Activated CD4-positive, alpha-beta memory T cell treated with anti-CD3 and anti-CD28 coated beads, Interleukin-2, amount 10 ng/mL, durations not matched to agents 7 days and 5 days (primary cell): ENCODE measurements at regions of chr1 and their contacts with region 1.

Region 1: GRCh38 chr1:43073490-43074230 is 98.4 kb downstream of the EBNA1BP2 start:
- DNase-seq: peak; percentile 80
- H3K4me3 Mint-ChIP-seq: no peak overlapping the region
- H3K27ac Mint-ChIP-seq: no peak overlapping the region
- H3K4me1 Mint-ChIP-seq: peaks cover 6% of the 10 kb centered on the region
- H3K27me3 Mint-ChIP-seq: no peaks in the 10 kb centered on the region

Region 2: DNA sequence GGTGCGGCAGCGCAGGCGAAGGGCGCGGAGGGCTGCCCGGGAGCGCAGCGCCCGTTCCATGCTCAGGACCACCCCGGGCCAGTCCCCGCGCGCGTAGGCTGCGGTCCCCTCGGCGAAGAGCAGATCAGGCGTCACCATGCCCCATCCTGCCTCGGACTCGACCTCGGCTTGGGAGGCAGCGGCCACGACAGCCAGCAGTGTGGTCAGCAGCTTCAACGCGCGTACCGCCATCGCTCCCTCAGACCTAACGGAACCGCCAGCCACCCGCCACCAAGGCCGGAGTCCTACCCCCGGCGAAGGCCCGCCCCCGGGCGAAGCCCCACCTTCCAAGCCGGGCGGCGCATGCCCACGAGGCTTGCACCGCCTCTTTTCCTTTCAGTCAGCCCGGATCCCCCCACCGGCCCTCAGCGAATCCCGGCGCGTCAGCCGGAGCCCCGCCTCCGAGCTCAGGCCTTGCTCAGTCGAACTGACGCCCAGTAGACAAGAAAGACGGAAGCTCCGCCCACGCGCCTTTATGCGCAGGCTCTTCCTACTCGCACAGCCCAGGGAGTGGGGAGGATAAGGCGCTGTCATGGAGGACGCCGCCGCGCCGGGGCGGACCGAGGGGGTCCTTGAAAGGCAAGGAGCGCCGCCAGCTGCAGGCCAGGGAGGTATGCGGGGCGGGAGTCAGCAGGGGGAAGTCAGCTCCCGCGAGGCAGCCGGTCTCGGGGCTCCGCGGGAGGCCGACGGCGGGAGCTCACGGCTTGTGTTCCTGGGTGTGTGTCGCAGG is 306.7 kb before region 1 on chr1 and contains the starts of genes C1orf50 and P3H1:
- CTCF ChIA-PET with region 1: interaction called, 18 read pairs
- POLR2A ChIA-PET with region 1: interaction called, 3 read pairs
- DNase-seq: peak; percentile 100
- H3K4me3 Mint-ChIP-seq: no peak within 1 kb of the TSS
- H3K27ac Mint-ChIP-seq: peak within 1 kb of the TSS; percentile 85
- H3K4me1 Mint-ChIP-seq: peaks cover 36% of the 10 kb centered on the region
- H3K27me3 Mint-ChIP-seq: no peaks in the 10 kb centered on the region
- total RNA-seq, gene C1orf50: 7.1 to 7.2 TPM
- total RNA-seq, gene P3H1: 40.1 to 43.3 TPM

Region 3: GRCh38 chr1:42846257-42847110 is 227.2 kb before region 1 on chr1 and contains the start of gene ZNF691:
- CTCF ChIA-PET with region 1: interaction called, 10 read pairs
- POLR2A ChIA-PET with region 1: no interaction called
- DNase-seq: peak; percentile 91
- H3K4me3 Mint-ChIP-seq: peak within 1 kb of the TSS; percentile 87
- H3K27ac Mint-ChIP-seq: peak within 1 kb of the TSS; percentile 79
- H3K4me1 Mint-ChIP-seq: peaks cover 33% of the 10 kb centered on the region
- H3K27me3 Mint-ChIP-seq: no peaks in the 10 kb centered on the region
- total RNA-seq, gene ZNF691: 10.4 to 12.6 TPM

Region 4: DNA sequence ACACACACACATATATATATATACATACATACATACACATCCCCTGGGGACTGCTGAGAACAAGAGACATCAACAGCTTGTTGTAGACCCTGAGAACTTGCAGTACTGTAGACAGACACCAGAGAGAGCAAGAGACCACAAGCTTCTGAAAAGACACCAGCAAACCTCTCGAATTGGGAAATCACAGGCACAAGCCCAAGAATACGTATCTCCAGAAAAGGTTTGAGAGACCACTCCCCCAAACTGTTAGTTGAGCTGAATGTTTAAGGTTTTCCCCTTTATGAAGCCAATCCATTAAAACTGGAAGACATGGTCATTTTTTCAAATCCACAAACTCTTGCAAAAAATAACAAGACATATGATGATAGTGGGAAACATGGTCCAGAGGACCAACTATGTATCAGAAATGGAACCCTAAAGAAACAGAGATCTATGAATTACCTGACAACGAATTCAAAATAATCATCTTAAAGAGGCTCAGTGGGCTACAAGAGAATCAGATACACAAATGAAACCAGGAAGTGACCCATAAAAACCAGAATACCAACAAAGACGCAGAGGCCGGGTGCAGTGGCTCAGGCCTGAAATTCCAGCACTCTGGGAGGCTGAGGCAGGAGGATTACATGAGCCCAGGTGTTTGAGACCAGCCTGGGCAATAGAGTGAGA is 160.1 kb before region 1 on chr1:
- CTCF ChIA-PET with region 1: interaction called, 380 read pairs
- POLR2A ChIA-PET with region 1: interaction called, 43 read pairs
- DNase-seq: peak; percentile 62
- H3K4me3 Mint-ChIP-seq: no peak overlapping the region
- H3K27ac Mint-ChIP-seq: no peak overlapping the region
- H3K4me1 Mint-ChIP-seq: peaks cover 16% of the 10 kb centered on the region
- H3K27me3 Mint-ChIP-seq: peaks cover 9% of the 10 kb centered on the region

Region 5: DNA sequence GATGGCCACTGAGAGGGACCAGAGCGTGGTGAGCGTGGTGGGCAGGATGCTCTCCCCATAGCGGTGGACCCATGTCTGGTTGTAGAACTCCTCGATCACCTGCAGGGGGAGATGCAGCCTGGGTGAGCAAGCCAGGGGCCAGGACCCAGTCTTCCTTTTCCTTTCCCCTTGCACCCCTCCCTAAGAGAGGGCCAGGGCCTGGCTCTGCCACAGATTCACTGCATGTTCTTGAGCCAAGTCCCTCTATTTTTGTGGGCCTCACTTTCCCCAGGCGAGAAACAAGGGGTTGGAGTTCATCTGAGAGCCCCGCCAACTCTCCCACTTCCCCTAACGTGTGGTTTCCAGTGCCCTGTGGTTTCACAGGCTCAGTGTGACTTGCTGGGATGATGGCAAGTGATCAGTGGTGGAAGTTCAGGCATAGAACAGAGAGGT is 142.5 kb before region 1 on chr1:
- CTCF ChIA-PET with region 1: interaction called, 13 read pairs
- POLR2A ChIA-PET with region 1: interaction called, 5 read pairs
- DNase-seq: peak; percentile 69
- H3K4me3 Mint-ChIP-seq: peak overlapping the region; percentile 74
- H3K27ac Mint-ChIP-seq: peak overlapping the region; percentile 94
- H3K4me1 Mint-ChIP-seq: peaks cover 97% of the 10 kb centered on the region
- H3K27me3 Mint-ChIP-seq: no peaks in the 10 kb centered on the region

Region 6: GRCh38 chr1:42952303-42953001 is 121.2 kb before region 1 on chr1:
- CTCF ChIA-PET with region 1: interaction called, 12 read pairs
- POLR2A ChIA-PET with region 1: interaction called, 4 read pairs
- DNase-seq: peak; percentile 57
- H3K4me3 Mint-ChIP-seq: peak overlapping the region; percentile 40
- H3K27ac Mint-ChIP-seq: peak overlapping the region; percentile 87
- H3K4me1 Mint-ChIP-seq: peaks cover 86% of the 10 kb centered on the region
- H3K27me3 Mint-ChIP-seq: no peaks in the 10 kb centered on the region

Region 7: GRCh38 chr1:43256675-43257570 is 183.3 kb after region 1 on chr1:
- CTCF ChIA-PET with region 1: no interaction called
- POLR2A ChIA-PET with region 1: no interaction called
- DNase-seq: no peak
- H3K4me3 Mint-ChIP-seq: no peak overlapping the region
- H3K27ac Mint-ChIP-seq: no peak overlapping the region
- H3K4me1 Mint-ChIP-seq: no peaks in the 10 kb centered on the region
- H3K27me3 Mint-ChIP-seq: peaks cover 16% of the 10 kb centered on the region